Activated CD4-positive, alpha-beta T cell treated with anti-CD3 and anti-CD28 coated beads, Interleukin-2, amount 10 ng/mL, durations not matched to agents 7 days and 5 days (primary cell): ENCODE measurements at regions of chr3 and their contacts with region 1.

Region 1: DNA sequence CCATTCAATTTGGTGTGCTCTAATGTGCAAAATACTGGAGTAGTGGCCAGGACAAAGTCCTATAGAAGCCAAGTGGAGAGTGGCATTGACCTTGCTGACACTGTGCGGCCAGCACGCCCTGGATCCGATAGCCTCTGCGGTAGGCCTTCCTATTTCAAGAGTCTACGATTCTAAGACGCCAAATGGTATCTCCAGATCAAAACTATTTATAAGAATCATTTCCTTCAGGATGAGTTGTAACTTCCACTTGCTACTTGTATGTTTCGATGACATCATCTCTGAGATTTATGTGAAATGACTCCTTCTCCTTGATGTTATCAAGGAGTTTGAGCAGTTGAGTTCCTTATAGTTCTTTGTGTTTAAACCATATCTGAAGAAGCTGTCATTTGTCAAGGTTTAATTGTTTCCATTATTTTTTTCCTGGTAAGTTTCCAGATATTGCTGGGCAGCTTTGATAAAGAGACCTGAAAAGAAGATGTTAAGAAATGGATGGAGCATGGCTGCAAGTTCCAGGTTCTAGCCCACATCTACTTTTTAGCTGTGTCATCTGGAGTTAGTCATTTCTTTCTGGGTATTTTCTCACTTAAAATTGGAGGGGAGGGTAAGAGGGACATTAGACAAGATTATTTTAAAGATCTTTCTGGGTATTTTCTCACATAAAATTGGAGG is 71.8 kb downstream of the TMEM44 start:
- DNase-seq: no peak
- H3K4me3 Mint-ChIP-seq: no peak overlapping the region
- H3K27ac Mint-ChIP-seq: no peak overlapping the region
- H3K4me1 Mint-ChIP-seq: peaks cover 3% of the 10 kb centered on the region
- H3K27me3 Mint-ChIP-seq: no peaks in the 10 kb centered on the region

Region 2: DNA sequence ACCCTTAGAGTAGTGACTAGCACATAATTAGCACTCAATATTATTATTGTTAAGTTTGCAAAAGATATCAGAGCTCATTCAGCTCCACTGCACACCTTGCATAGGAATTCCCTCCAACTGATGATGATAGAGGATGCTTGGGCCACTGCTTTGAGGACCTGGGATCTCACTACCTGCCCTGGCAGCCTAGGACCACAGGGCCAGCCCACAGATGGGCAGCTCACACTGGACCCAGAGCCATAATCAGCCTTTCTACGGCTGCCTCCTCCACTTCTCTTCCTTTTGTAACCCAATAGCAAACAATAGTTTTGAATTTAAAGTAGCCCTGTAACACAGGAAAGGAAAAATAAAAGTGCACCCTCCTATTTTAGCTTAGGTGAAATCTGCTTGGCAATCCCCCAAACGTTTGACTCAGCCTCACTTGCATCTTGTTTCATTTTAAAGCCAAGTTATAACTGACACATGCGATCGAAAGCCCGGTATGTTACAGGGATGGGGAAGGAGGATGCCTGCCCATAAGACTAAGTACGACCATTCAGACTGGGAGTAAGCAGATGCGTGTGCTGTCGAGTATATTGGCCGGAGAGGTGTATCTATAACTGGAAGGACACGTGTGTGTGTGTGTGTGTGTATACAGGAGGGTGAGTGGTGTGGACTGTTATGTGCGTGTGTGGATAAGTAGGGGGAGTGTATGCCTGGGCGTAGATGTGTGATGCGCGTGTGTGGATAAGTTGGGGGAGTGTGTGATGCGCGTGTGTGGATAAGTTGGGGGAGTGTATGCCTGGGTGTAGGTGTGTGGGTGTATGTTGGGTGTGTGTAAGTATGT is 276.2 kb before region 1 on chr3:
- CTCF ChIA-PET with region 1: no interaction called
- POLR2A ChIA-PET with region 1: no interaction called
- DNase-seq: no peak
- H3K4me3 Mint-ChIP-seq: no peak overlapping the region
- H3K27ac Mint-ChIP-seq: no peak overlapping the region
- H3K4me1 Mint-ChIP-seq: no peaks in the 10 kb centered on the region
- H3K27me3 Mint-ChIP-seq: peaks cover 24% of the 10 kb centered on the region

Region 3: GRCh38 chr3:194306771-194307640 is 254.4 kb before region 1 on chr3:
- CTCF ChIA-PET with region 1: no interaction called
- POLR2A ChIA-PET with region 1: no interaction called
- DNase-seq: peak; percentile 63
- H3K4me3 Mint-ChIP-seq: peak overlapping the region; percentile 64
- H3K27ac Mint-ChIP-seq: peak overlapping the region; percentile 91
- H3K4me1 Mint-ChIP-seq: peaks cover 73% of the 10 kb centered on the region
- H3K27me3 Mint-ChIP-seq: no peaks in the 10 kb centered on the region

Region 4: DNA sequence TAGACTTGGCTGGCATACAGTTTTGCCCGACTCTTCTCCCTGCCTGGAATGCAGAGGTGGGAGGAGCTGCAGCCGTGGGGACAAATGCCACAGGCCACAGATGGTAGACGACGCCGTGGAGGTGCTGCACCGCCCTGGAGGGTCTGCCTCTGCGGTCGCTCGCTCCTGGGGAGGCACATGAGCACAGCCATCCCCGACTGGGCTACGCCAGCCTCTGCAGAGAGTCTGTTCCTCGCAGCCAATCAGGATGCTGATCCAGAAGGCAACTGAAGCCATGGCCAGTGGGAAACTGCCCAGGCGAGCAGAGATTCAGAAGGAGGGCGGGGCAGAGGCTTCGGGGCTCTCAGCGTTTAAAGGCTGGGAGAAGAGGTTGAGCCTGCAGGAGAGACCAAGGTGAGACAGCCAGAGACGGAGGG is 180.0 kb before region 1 on chr3:
- CTCF ChIA-PET with region 1: no interaction called
- POLR2A ChIA-PET with region 1: no interaction called
- DNase-seq: no peak
- H3K4me3 Mint-ChIP-seq: no peak overlapping the region
- H3K27ac Mint-ChIP-seq: no peak overlapping the region
- H3K4me1 Mint-ChIP-seq: no peaks in the 10 kb centered on the region
- H3K27me3 Mint-ChIP-seq: peaks cover 3% of the 10 kb centered on the region

Region 5: GRCh38 chr3:194573691-194574437 is 12.4 kb after region 1 on chr3:
- CTCF ChIA-PET with region 1: interaction called, 17 read pairs
- POLR2A ChIA-PET with region 1: no interaction called
- DNase-seq: peak; percentile 45
- H3K4me3 Mint-ChIP-seq: no peak overlapping the region
- H3K27ac Mint-ChIP-seq: no peak overlapping the region
- H3K4me1 Mint-ChIP-seq: no peaks in the 10 kb centered on the region
- H3K27me3 Mint-ChIP-seq: peaks cover 19% of the 10 kb centered on the region